Dendritic cell treated with granulocyte-macrophage colony-stimulating factor and Interleukin-4, amounts not matched to agents 40 ng/mL and 50 ng/mL, for 4 days (primary cell): ENCODE measurements at regions of chr7 and their contacts with region 1.

Region 1: DNA sequence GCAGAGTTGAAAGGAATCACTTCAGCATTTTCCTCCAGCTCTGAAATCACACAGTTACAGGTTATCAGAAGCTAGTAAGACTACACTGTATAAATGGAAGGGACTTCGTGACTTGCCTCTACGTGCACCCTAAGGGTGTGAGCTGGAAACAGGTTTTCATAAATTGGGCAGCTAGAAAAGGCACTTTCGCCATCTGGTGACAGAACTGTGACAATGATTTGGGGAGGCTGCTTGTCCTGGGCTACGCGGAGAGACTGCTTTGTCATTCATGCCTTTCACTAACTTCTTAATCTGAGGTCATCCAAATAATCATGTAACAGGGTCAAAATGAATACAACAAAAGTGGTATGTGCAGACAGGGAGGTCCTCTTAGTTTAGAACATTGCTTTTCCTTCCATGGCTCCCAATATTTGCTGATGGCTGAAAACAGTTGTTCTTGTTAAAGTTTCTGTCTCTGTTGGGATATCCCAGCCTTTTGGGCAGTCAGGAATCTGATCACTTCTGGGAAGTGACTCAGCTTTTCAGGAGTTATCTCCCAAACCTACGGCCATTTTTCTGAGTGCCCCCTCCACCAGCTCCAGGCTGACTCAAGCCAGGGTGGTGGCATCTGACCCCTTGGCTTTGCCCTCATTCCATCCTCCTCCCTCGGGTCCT is 17.8 kb downstream of the VWC2 start:
- H3K4me3 Mint-ChIP-seq: no peak overlapping the region
- H3K27ac Mint-ChIP-seq: no peak overlapping the region
- H3K4me1 Mint-ChIP-seq: no peaks in the 10 kb centered on the region
- H3K27me3 Mint-ChIP-seq: peaks cover 3% of the 10 kb centered on the region

Region 2: DNA sequence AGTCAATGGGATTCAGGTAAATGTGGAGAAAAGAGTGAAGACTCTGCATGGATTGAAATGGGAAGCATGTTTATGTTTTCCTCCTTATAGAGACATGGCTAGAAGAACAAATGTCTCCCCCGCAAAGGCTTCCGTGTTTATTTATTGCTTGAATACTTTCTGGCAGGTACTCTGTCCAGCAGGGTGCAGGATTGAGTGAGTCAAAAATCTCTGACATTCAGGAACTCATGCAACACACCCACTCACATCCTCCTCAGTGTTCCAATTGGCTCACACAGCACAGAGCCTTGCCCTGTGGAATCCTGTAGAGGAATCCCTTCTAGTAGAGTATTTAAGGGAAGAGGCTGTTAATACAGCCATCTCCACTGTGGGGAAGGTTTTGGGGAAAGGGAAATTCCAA is 308.1 kb before region 1 on chr7:
- intact Hi-C with region 1: loop called (anchors 1 kb)
- H3K4me3 Mint-ChIP-seq: no peak overlapping the region
- H3K27ac Mint-ChIP-seq: no peak overlapping the region
- H3K4me1 Mint-ChIP-seq: no peaks in the 10 kb centered on the region
- H3K27me3 Mint-ChIP-seq: no peaks in the 10 kb centered on the region